PC-9 (cell line): ENCODE measurements at regions of chr17 and their contacts with region 1.

Region 1: DNA sequence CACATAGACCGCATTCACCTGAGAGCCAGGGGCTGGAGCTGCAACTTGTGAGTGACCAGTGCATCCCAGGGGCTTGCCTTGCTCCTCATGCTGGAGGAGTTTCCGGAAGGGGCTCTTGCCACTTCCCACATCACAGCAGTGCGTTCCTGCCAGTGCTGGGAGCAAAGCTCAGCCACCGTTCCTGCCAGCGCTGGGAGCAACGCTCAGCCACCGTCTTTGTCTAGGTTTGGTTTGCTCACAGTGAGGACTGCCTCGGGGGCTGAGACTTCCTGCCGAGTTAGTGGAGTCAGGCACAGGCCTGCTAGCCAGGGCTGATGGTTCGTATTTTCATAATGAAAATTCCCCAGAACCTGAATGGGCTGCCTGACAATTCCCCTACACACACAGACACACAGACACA is 5.4 kb upstream of the CHRNE start:
- DNase-seq: no peak
- H3K4me3 ChIP-seq: no peak overlapping the region
- H3K27ac ChIP-seq: no peak overlapping the region
- H3K4me1 ChIP-seq: peaks cover 20% of the 10 kb centered on the region
- H3K27me3 ChIP-seq: no peaks in the 10 kb centered on the region
- CTCF ChIP-seq: no peak

Region 2: DNA sequence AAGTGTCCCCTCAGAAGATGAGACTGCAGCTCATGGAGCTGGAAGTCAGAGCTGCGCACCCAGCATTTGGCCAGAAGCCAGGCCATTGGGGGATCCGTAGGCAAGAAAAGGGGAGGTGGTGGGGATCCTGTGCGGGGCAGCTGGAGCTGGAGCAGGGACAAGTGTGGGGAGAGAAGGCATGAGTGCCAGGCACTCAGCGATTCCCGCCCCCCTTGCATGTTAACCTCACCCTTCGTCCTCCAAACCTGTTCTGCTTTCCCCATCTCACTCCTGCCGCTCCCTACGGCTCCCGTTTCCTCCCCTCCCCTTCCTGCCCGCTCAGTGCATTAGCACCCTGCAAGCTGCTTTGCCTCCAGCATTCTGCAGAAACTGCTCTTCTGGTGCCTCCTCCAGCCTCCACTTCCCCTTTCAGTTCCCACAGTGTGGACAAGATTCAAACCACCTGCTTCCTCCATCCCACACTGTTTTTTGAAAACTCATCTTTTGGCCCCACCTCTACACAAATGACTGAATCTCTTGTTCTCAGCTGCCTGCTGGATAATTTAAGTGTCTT is 272.4 kb before region 1 on chr17:
- CTCF ChIA-PET with region 1: interaction called, 6 read pairs
- POLR2A ChIA-PET with region 1: no interaction called
- intact Hi-C with region 1: loop called (anchors 5 kb)
- DNase-seq: peak in 1 of 2 experiments; percentile 26
- H3K4me3 ChIP-seq: no peak overlapping the region
- H3K27ac ChIP-seq: no peak overlapping the region
- H3K4me1 ChIP-seq: peaks cover 10% of the 10 kb centered on the region; the same call in 1 of the 2 replicates
- H3K27me3 ChIP-seq: peaks cover 5% of the 10 kb centered on the region; the same call in 1 of the 2 replicates
- CTCF ChIP-seq: no peak

Region 3: GRCh38 chr17:4739122-4740024 is 168.9 kb before region 1 on chr17 and contains the starts of genes CXCL16 and ZMYND15:
- CTCF ChIA-PET with region 1: no interaction called
- POLR2A ChIA-PET with region 1: interaction called, 10 read pairs
- intact Hi-C with region 1: no loop called
- DNase-seq: peak in 1 of 2 experiments; percentile 75
- H3K4me3 ChIP-seq: peak within 1 kb of the TSS; percentile 95
- H3K27ac ChIP-seq: peak within 1 kb of the TSS; percentile 75
- H3K4me1 ChIP-seq: peaks cover 12% of the 10 kb centered on the region; the same call in 1 of the 2 replicates
- H3K27me3 ChIP-seq: 0 out of 2 replicates have a peak, but pooled peaks cover 6% of the 10 kb centered on the region
- CTCF ChIP-seq: 0 out of 2 replicates have a peak, but pooled peaks have one; percentile 3
- total RNA-seq, gene CXCL16: 52.4 and 60.2 TPM in 2 replicates
- total RNA-seq, gene ZMYND15: 2.3 and 5.4 TPM in 2 replicates

Region 4: GRCh38 chr17:4858882-4859260 is 49.4 kb before region 1 on chr17:
- CTCF ChIA-PET with region 1: no interaction called
- POLR2A ChIA-PET with region 1: no interaction called
- intact Hi-C with region 1: no loop called
- DNase-seq: peak; percentile 59 to 84
- H3K4me3 ChIP-seq: no peak overlapping the region
- H3K27ac ChIP-seq: peak overlapping the region; percentile 37
- H3K4me1 ChIP-seq: peaks cover 20% of the 10 kb centered on the region
- H3K27me3 ChIP-seq: no peaks in the 10 kb centered on the region
- CTCF ChIP-seq: no peak

Region 5: GRCh38 chr17:4948931-4949320 is 40.6 kb after region 1 on chr17:
- CTCF ChIA-PET with region 1: interaction called, 3 read pairs
- POLR2A ChIA-PET with region 1: no interaction called
- intact Hi-C with region 1: loop called (anchors 2 kb)
- DNase-seq: peak; percentile 71 to 92
- H3K4me3 ChIP-seq: peak overlapping the region; percentile 99
- H3K27ac ChIP-seq: peak overlapping the region; percentile 99
- H3K4me1 ChIP-seq: peaks cover 39% of the 10 kb centered on the region
- H3K27me3 ChIP-seq: no peaks in the 10 kb centered on the region
- CTCF ChIP-seq: no peak

Region 6: DNA sequence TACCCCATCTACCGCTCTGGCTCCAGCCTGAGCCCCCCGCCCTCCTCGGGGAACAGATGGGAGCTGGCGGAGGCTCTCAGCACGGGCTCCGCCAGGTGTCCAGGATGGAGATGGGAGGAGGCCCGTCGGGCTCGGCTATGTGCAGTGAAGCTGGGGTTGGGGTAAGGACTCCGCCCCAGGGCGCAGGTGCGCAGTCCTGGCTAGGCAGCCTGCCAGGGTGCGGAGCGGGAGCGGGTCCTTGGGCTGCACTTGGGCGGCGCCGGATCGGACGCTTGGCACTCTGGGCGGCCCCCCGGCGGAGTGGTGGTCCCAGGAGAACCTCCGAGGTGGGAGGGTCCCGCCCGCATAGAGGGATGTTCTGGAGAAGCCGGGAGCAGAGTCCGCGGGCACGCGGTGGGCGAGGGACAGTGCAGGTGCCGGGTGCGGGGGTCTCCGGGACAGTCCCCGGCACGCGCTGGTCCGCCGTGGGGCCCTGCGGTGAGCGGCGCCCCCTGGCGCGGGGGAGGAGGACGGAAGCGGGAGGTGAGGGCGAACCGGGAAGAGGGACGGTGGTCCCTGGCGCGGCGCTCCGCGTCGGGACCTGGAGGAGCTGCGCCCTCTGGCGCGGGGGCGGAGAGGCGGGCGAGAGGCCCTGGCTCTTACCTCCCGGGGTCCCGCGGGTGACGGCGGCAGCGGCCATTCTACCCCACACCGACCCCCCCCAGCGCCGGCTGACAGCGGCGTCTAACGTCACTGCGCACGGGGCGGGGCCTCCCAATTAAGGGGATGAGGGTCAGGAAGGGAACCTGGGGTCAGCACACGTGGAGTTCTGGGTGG is 78.9 kb after region 1 on chr17 and contains the start of gene CAMTA2:
- CTCF ChIA-PET with region 1: interaction called, 9 read pairs
- POLR2A ChIA-PET with region 1: interaction called, 3 read pairs
- intact Hi-C with region 1: loop called (anchors 1 kb)
- DNase-seq: peak; percentile 57 to 82
- H3K4me3 ChIP-seq: peak within 1 kb of the TSS; percentile 95
- H3K27ac ChIP-seq: peak within 1 kb of the TSS; percentile 25
- H3K4me1 ChIP-seq: peaks cover 23% of the 10 kb centered on the region
- H3K27me3 ChIP-seq: no peaks in the 10 kb centered on the region
- CTCF ChIP-seq: peak; percentile 79
- total RNA-seq, gene CAMTA2: 49.2 and 51.1 TPM in 2 replicates

Region 7: GRCh38 chr17:5065227-5065744 is 157.0 kb after region 1 on chr17:
- CTCF ChIA-PET with region 1: interaction called, 12 read pairs
- POLR2A ChIA-PET with region 1: interaction called, 6 read pairs
- intact Hi-C with region 1: loop called (anchors 1 kb)
- DNase-seq: no peak
- H3K4me3 ChIP-seq: no peak overlapping the region
- H3K27ac ChIP-seq: no peak overlapping the region
- H3K4me1 ChIP-seq: no peaks in the 10 kb centered on the region
- H3K27me3 ChIP-seq: peaks cover 5% of the 10 kb centered on the region; the same call in 1 of the 2 replicates
- CTCF ChIP-seq: no peak